HepG2 (cell line): ENCODE measurements at regions of chr6 and their contacts with region 1.

Region 1: DNA sequence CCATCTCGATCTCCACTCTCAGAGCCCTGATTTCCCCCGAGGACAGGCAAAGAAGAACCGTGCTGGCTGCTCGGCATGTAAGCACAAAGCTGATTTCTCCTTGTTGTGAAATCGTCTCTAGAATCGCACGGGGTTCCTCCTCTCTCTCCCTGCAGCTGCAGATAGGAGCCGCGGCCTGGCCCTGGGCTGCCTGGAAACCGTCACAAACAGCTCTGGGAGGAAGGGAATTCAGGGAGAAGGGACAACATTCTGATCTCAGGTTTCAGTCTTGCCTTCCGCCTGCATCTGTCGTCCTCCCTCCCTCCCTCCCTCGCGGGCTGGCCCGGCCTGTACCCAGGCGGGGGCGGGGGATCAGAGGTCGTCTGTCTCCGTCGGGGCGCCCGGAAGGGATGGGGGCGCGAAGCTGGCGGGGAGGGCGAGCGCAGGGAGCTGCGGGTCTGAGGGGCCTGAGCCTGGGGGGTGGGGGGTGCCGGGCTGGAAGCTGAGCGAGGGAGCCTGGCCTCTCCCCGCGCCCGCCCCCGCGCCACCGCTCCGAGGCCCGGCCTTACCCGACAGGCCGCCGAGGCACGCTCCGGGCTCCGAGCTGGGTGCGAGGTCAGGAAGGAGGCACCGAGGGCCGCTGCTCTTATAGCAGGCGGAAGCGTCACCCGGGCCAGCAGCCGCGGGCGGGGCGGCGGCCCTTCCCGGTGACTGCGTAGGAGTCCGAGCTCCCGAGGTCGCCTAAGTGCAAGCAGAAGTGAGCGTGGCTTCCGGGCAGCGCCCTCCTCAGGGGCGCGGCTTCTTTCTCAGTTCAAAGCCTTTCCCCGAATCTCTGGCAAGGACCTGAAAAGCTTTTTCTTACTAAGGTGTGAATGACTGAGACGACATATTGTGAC is at the start of gene SERPINB1:
- DNase-seq: peak; percentile 97
- ATAC-seq: peak; percentile 88
- H3K4me3 ChIP-seq: peak within 1 kb of the TSS; percentile 66 to 86 (median 75)
- H3K27ac ChIP-seq: peak within 1 kb of the TSS; percentile 97
- H3K4me1 ChIP-seq: peaks cover 71% of the 10 kb centered on the region
- H3K27me3 ChIP-seq: no peaks in the 10 kb centered on the region
- CTCF ChIP-seq: peak; percentile 64
- EP300 ChIP-seq: peak; percentile 70 to 77
- POLR2A ChIP-seq: peak; percentile 64 to 83
- RAD21 ChIP-seq: peak; percentile 49
- total RNA-seq, gene SERPINB1: 41.4 and 60.1 TPM in 2 replicates

Region 2: DNA sequence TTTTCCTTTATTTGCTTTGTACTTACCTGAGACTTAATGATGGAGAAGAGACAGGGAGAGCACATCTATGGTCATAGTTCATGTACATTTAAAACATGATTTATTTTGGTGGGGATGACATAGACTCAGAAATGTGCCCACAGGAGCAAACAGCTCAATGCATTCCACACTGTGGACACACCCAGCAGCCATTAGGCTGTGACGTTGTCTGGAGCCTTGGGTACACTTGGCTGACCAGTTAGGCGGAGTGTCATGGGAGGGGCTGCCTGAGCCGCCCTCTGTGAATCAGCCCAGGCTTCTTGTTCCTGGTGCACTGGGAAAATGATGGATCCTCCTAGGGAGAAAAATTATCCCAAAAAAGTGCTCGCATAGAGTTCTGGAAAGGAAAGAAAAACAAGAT is 365.1 kb before region 1 on chr6:
- CTCF ChIA-PET with region 1: no interaction called
- POLR2A ChIA-PET with region 1: no interaction called
- in situ Hi-C with region 1: no loop called
- intact Hi-C with region 1: no loop called
- DNase-seq: no peak
- ATAC-seq: no peak
- H3K4me3 ChIP-seq: no peak overlapping the region
- H3K27ac ChIP-seq: no peak overlapping the region
- H3K4me1 ChIP-seq: peaks cover 3% of the 10 kb centered on the region
- H3K27me3 ChIP-seq: peaks cover 1 to 15% of the 10 kb centered on the region in 2 experiments; a peak in 2 of 5 replicates
- CTCF ChIP-seq: no peak
- EP300 ChIP-seq: no peak
- POLR2A ChIP-seq: no peak
- RAD21 ChIP-seq: no peak

Region 3: GRCh38 chr6:2791124-2791974 is 50.2 kb before region 1 on chr6:
- CTCF ChIA-PET with region 1: interaction called, 9 read pairs
- POLR2A ChIA-PET with region 1: interaction called, 68 read pairs
- in situ Hi-C with region 1: loop called (anchors 5 kb)
- intact Hi-C with region 1: loop called (anchors 1 kb)
- DNase-seq: peak; percentile 81
- ATAC-seq: peak; percentile 94
- H3K4me3 ChIP-seq: no peak overlapping the region
- H3K27ac ChIP-seq: no peak overlapping the region
- H3K4me1 ChIP-seq: peaks cover 9% of the 10 kb centered on the region; the same call in 1 of the 2 replicates
- H3K27me3 ChIP-seq: no peaks in the 10 kb centered on the region
- CTCF ChIP-seq: peak; percentile 94
- EP300 ChIP-seq: 0 out of 4 replicates have a peak, but pooled peaks of 1 of the 2 experiments have one; percentile 11
- POLR2A ChIP-seq: no peak
- RAD21 ChIP-seq: peak; percentile 96

Region 4: DNA sequence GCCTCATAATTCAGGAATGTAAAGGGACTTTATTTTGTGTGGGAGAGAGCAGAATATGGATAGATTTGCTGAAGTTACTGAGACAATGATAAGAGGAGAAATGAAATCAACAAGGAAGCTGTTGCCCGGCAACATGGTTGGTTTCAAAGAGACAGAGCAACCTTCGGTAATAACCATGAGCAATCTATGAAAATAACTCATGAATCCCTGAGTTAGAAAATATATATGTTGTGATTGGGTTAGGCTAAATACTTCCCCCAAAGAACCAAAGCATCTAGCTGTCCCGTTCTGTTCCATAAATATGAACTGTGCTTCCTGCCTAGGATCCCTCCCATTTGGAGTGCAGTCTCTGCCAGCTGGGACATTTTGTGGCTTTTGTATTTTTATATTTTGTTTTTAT is 22.9 kb before region 1 on chr6:
- CTCF ChIA-PET with region 1: no interaction called
- POLR2A ChIA-PET with region 1: interaction called, 33 read pairs
- in situ Hi-C with region 1: no loop called
- intact Hi-C with region 1: no loop called
- DNase-seq: no peak
- ATAC-seq: no peak
- H3K4me3 ChIP-seq: 0 out of 6 replicates have a peak overlapping the region, but pooled peaks of 1 of the 3 experiments have one; percentile 7
- H3K27ac ChIP-seq: no peak overlapping the region
- H3K4me1 ChIP-seq: peaks cover 40% of the 10 kb centered on the region
- H3K27me3 ChIP-seq: no peaks in the 10 kb centered on the region
- CTCF ChIP-seq: no peak
- EP300 ChIP-seq: no peak
- POLR2A ChIP-seq: no peak
- RAD21 ChIP-seq: no peak

Region 5: DNA sequence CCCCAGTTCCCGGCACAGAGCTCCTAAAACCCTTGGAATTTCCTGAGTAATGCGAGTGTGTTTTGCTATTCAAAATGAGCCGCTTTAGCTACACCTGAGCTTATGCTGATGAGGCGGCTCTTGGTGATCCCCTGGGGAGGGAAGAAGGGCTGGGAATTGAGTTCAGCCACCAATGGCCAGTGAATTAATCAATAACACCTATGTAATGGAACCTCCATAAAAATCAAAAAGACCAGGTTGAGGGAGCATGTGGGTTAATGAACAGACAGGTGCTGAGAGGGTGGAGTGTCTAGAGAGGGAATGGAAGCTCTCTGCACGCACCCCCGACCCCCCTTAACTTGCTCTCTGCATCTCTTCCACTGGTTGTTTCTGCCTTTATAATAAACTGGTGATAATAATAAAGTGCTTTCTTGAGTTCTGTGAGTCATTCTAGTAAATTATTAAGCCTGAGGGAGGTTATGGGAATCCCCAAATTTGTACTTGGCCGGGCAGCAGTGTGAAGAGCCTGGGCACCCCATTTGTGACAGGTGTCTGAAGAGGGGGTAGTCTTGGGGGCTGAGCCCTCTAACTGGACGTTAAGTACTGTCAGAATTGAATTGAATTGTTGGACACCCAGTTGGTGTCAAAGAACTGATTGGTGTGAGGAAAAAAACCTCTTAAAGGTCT is 24.8 kb after region 1 on chr6:
- CTCF ChIA-PET with region 1: no interaction called
- POLR2A ChIA-PET with region 1: interaction called, 20 read pairs
- in situ Hi-C with region 1: no loop called
- intact Hi-C with region 1: no loop called
- DNase-seq: no peak
- ATAC-seq: no peak
- H3K4me3 ChIP-seq: peak overlapping the region in 1 of 3 experiments; percentile 16; a peak in 1 of 6 replicates
- H3K27ac ChIP-seq: no peak overlapping the region
- H3K4me1 ChIP-seq: peaks cover 61% of the 10 kb centered on the region
- H3K27me3 ChIP-seq: no peaks in the 10 kb centered on the region
- CTCF ChIP-seq: no peak
- EP300 ChIP-seq: no peak
- POLR2A ChIP-seq: no peak
- RAD21 ChIP-seq: no peak

Region 6: DNA sequence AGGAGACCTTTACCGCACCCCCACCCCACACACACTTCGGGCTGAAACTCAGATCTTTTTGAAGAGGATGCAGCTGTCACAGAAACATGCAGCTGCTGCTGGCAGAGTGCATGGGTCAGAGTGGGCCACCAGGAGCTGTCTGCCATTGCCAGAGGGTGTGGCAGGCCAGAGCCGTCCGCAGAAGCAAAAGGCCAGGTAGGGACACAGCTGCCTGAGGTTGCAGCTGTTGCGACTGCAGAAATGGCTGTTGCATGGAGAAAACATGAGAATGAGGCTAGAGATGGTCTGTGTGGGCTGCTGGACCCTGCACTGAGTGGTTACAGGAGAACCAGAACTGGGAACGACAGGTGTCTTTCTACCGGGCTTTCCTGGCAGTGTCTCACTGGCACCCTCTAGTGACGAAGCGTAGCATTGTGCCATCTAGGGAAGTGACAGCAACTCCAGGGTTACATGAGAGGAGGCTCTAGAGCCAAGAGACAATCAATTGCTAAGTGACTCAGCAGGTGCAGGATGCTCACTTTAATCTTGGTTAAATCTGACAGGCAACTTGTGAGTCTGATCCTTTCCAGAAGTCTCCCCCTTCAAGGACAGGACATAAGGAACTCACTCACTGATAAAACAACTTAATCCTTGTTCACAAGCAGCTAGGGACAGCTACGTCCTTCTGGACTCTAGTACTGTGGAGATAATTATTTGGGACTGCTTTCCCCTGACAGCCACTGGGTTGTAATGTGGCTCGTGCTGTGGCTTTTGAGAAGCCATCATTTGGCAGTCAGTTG is 90.7 kb after region 1 on chr6:
- CTCF ChIA-PET with region 1: interaction called, 42 read pairs
- POLR2A ChIA-PET with region 1: interaction called, 16 read pairs
- in situ Hi-C with region 1: no loop called
- intact Hi-C with region 1: loop called (anchors 1 kb)
- DNase-seq: peak; percentile 85
- ATAC-seq: peak; percentile 99
- H3K4me3 ChIP-seq: peak overlapping the region in 1 of 3 experiments; percentile 63; a peak in 2 of 6 replicates
- H3K27ac ChIP-seq: no peak overlapping the region
- H3K4me1 ChIP-seq: peaks cover 10% of the 10 kb centered on the region
- H3K27me3 ChIP-seq: peaks cover 0 to 3% of the 10 kb centered on the region in 2 experiments; a peak in 2 of 5 replicates
- CTCF ChIP-seq: peak; percentile 99
- EP300 ChIP-seq: no peak
- POLR2A ChIP-seq: no peak
- RAD21 ChIP-seq: peak; percentile 96

Region 7: DNA sequence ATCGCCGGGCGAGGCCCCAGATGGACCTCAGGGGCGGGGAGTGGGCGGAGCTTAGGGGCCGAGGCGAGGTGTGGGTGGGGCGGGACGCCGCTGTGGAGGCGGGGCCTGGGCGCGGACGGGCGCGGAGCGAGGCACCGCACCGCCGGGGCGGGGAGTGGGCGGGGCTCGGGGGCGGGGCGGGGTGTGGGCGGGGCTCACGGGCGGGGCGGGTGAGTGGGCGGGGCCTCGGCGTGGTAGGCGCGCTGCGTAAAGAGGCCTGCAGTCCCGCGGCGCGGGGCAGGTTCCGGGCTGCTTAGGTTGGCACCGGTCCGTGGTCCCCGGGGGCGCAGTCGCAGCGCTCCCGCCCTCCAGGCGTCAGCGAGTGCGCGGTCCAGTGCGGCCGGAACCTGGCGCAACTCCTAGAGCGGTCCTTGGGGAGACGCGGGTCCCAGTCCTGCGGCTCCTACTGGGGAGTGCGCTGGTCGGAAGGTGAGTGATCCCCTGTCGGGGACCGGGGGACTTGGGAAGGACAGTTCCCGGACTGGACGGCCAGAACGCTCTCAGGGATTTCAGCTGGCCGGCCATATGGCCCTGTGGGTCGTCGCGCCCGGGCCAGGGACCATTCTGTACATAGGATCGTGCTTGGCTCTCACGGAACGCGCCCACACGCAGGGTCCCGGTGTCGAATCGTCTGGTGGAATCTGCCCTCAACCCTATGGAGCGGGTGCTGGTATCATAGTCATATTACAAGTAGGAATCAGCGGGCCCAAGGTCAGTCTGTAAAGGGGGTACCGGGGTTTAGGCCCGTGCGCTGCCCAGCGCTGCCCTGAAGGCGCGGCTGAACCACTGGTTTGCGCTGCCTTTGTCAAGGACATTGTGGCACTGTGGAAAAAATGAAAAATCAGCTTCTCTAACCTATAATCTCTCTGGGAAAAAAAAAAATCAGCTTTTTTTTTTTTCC is 158.4 kb after region 1 on chr6 and contains the start of gene NQO2:
- CTCF ChIA-PET with region 1: no interaction called
- POLR2A ChIA-PET with region 1: interaction called, 10 read pairs
- in situ Hi-C with region 1: no loop called
- intact Hi-C with region 1: no loop called
- DNase-seq: peak; percentile 76
- ATAC-seq: peak; percentile 79
- H3K4me3 ChIP-seq: peak within 1 kb of the TSS; percentile 91 to 100 (median 100)
- H3K27ac ChIP-seq: peak within 1 kb of the TSS; percentile 92
- H3K4me1 ChIP-seq: peaks cover 44% of the 10 kb centered on the region
- H3K27me3 ChIP-seq: no peaks in the 10 kb centered on the region; a peak in 1 of 5 replicates
- CTCF ChIP-seq: peak; percentile 27; the same call in 1 of the 2 replicates
- EP300 ChIP-seq: 0 out of 4 replicates have a peak, but pooled peaks of 1 of the 2 experiments have one; percentile 14
- POLR2A ChIP-seq: peak; percentile 95 to 98
- RAD21 ChIP-seq: peak; percentile 58
- total RNA-seq, gene NQO2: 56.5 and 63.0 TPM in 2 replicates